ENCODE measurements at regions of chr2 and their contacts with region 1.

Region 1: GRCh38 chr2:11778923-11779757 is 32.7 kb downstream of the LPIN1 start:
- DNase-seq: peak; percentile 86
- ATAC-seq: peak; percentile 98
- H3K4me3 ChIP-seq: no peak overlapping the region
- H3K27ac ChIP-seq: no peak overlapping the region
- H3K4me1 ChIP-seq: peaks cover 8% of the 10 kb centered on the region; the same call in 1 of the 2 replicates
- H3K27me3 ChIP-seq: no peaks in the 10 kb centered on the region
- CTCF ChIP-seq: peak; percentile 97

Region 2: GRCh38 chr2:11738589-11739436 is 40.3 kb before region 1 on chr2:
- CTCF ChIA-PET with region 1: interaction called, 5 read pairs
- POLR2A ChIA-PET with region 1: no interaction called
- intact Hi-C with region 1: loop called (anchors 1 kb)
- DNase-seq: peak; percentile 71
- ATAC-seq: peak; percentile 92
- H3K4me3 ChIP-seq: no peak overlapping the region
- H3K27ac ChIP-seq: peak overlapping the region; percentile 44
- H3K4me1 ChIP-seq: peaks cover 28% of the 10 kb centered on the region
- H3K27me3 ChIP-seq: no peaks in the 10 kb centered on the region
- CTCF ChIP-seq: peak; percentile 66

Measured in PC-3 (cell line).